ENCODE measurements at regions of chr4 and their contacts with region 1.

Region 1: GRCh38 chr4:173420324-173420752 is 21.4 kb upstream of the SCRG1 start:
- DNase-seq: peak; percentile 31
- H3K4me3 Mint-ChIP-seq: no peak overlapping the region
- H3K27ac Mint-ChIP-seq: no peak overlapping the region
- H3K4me1 Mint-ChIP-seq: peaks cover 15% of the 10 kb centered on the region
- H3K27me3 Mint-ChIP-seq: no peaks in the 10 kb centered on the region
- CTCF ChIP-seq: peak; percentile 39

Region 2: DNA sequence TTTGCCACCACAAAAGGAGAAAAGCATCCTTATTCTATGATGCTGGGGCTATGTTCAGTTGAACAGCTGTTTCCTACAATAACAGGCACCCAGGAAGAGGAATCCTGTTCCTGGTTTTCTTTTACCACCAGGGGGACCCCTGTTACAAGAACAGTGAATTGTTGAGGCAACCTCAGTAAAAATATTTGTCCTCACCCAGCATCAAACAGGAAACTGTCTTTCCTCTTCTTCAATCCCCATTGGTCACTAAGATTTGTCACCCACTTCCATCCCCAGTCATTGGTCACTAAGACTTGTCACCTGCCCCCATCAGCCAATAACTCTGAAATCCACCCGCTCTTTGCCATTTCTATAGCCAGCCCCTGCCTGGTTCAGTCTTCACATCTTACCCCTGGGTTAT is 395.2 kb before region 1 on chr4:
- CTCF ChIA-PET with region 1: interaction called, 4 read pairs
- POLR2A ChIA-PET with region 1: no interaction called
- intact Hi-C with region 1: loop called (anchors 5 kb)
- DNase-seq: peak; percentile 81
- H3K4me3 Mint-ChIP-seq: no peak overlapping the region
- H3K27ac Mint-ChIP-seq: no peak overlapping the region
- H3K4me1 Mint-ChIP-seq: no peaks in the 10 kb centered on the region
- H3K27me3 Mint-ChIP-seq: no peaks in the 10 kb centered on the region
- CTCF ChIP-seq: peak; percentile 74

Region 3: DNA sequence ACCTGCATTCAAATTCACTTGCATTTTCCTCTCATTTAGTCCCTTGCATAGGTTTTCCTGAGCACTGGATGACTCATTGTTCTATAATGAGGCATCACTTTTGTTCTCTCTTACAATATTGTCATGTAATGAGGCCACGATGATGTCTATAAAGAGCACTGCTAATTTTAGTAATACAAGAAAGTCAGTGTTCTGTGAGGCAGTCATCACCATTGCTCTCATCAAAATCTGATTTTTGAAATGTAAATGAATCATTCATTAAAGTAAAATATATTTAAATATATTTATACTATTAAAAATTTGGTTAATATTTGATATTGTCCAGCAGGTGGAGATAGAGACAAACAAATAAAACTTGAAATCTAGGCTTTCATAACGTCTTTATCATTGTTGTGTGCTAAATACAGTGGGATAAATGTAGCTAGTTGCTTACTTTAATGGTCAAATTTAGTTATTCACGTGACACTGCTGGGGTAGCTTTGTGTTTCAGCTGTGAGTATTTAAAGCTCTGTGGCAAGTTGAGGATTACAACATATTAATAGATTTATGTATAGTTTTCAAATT is 101.6 kb before region 1 on chr4:
- CTCF ChIA-PET with region 1: interaction called, 124 read pairs
- POLR2A ChIA-PET with region 1: interaction called, 28 read pairs
- intact Hi-C with region 1: loop called (anchors 1 kb)
- DNase-seq: peak; percentile 56
- H3K4me3 Mint-ChIP-seq: no peak overlapping the region
- H3K27ac Mint-ChIP-seq: no peak overlapping the region
- H3K4me1 Mint-ChIP-seq: peaks cover 12% of the 10 kb centered on the region
- H3K27me3 Mint-ChIP-seq: no peaks in the 10 kb centered on the region
- CTCF ChIP-seq: peak; percentile 46

Region 4: GRCh38 chr4:173370477-173371291 is 49.7 kb before region 1 on chr4 and contains the start of gene SAP30:
- CTCF ChIA-PET with region 1: interaction called, 14 read pairs
- POLR2A ChIA-PET with region 1: interaction called, 183 read pairs
- intact Hi-C with region 1: loop called (anchors 1 kb)
- DNase-seq: peak; percentile 98
- H3K4me3 Mint-ChIP-seq: peak within 1 kb of the TSS; percentile 96
- H3K27ac Mint-ChIP-seq: peak within 1 kb of the TSS; percentile 96
- H3K4me1 Mint-ChIP-seq: peaks cover 20% of the 10 kb centered on the region
- H3K27me3 Mint-ChIP-seq: no peaks in the 10 kb centered on the region
- CTCF ChIP-seq: no peak
- total RNA-seq, gene SAP30: 17.6 and 30.6 TPM in 2 replicates

Region 5: DNA sequence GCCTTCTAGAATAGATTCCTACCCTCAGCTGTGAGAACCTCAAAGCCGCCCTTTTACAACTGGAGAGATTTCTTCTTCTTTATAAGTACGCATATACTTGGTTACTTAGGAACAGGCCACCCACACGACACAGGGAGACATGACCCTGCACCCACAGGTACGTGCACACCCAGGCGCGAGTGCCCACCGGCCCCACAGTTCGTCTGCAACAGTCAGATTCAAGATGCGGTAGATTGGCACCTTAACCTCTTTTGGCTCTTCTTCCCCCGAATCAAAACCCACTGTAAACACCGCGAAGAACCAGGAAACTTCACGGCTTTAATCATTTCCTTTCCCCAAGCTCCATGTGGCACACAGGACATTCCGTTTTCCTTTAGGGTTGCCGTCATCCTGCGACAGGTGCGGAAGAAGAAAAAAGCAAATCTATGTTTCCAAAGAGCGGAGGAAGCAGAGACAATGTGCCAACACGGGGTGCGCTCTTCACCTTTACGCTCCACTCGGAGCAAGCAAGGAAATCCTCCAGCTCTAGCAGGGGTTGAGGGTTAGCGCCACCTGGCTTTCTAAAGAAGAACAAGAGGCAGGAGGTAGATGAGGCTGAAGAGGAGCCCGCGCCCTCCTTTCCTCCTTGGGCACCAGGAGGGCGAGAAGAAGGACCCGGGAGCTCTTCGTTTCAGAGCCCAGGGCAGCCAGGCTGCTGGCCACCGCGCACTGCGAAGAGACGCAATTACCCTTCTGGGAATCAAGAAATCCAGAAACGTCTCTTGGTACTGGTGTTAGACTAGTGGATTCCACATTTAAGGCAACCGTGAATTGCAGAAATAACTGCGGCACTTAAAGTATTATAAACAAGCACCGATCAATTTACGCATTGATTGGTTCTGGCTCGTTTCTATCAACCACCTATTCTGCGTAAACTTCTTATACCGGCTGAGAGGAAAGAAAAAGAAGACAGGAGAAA is 74.0 kb after region 1 on chr4:
- CTCF ChIA-PET with region 1: interaction called, 11 read pairs
- POLR2A ChIA-PET with region 1: interaction called, 3 read pairs
- intact Hi-C with region 1: loop called (anchors 1 kb)
- DNase-seq: peak; percentile 76
- H3K4me3 Mint-ChIP-seq: peak overlapping the region; percentile 67
- H3K27ac Mint-ChIP-seq: no peak overlapping the region
- H3K4me1 Mint-ChIP-seq: peaks cover 8% of the 10 kb centered on the region
- H3K27me3 Mint-ChIP-seq: peaks cover 14% of the 10 kb centered on the region
- CTCF ChIP-seq: peak; percentile 61

Region 6: DNA sequence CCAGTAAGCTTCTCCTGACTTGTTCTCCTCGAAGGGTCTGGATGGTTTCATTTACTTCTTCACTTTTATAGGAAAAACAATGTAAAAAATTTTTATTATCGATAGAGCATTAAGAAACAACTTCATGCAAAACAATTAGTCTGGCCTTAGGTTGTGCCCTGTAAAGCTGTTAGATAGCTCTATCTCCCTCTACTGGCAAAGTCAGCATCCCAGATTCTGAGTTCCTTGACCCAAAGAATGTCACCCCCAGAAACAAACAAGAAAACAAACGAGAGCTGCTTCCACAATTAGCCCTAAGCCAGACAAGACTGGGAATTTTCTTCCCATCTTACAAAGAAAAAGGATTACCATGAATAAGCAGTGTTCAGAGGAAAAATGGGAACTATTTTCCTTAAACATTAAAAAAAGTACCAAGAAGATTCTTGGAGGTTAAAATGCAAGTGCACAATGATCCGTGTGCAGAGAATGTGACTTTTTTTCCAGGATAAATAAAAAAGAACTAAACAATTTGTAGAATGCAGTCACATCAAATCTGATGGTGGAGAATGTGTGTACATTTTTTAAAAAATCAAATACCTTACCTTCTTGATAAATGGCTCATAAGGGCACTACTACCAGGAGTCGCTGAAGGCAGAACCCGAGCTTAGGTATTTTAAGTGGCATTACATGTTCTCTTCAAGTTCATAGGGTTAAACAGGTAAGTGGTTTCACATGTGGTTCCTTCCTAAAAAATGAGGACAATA is 570.0 kb after region 1 on chr4:
- CTCF ChIA-PET with region 1: interaction called, 12 read pairs
- POLR2A ChIA-PET with region 1: no interaction called
- intact Hi-C with region 1: no loop called
- DNase-seq: peak; percentile 42
- H3K4me3 Mint-ChIP-seq: no peak overlapping the region
- H3K27ac Mint-ChIP-seq: no peak overlapping the region
- H3K4me1 Mint-ChIP-seq: no peaks in the 10 kb centered on the region
- H3K27me3 Mint-ChIP-seq: peaks cover 96% of the 10 kb centered on the region
- CTCF ChIP-seq: peak; percentile 61

Region 7: DNA sequence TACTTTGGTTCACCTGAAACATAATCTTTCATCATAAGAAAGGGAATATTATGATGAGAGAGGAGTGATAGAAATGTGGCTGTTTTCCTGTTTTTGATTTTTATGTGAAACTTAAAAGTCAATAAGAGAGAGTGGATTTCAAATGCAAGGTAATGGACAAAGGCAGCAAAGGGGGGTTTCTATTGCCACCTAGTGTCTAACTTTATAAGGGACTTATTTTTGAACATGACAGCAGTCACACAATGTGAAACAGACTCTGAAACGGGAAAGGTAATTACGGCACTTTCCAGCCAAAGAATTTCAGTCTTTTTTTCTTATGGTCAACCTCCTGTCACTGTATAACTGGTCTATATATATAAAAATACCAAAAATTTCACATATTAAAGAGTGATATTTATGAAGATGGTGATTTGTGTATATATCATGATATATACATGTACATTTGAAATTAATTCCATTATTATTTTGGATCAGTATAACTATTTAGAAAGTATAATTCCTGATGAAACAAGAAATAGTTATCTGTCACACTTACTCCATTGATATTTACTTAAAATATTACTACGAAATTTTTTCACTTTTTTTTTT is 736.0 kb after region 1 on chr4:
- CTCF ChIA-PET with region 1: interaction called, 3 read pairs
- POLR2A ChIA-PET with region 1: no interaction called
- intact Hi-C with region 1: loop called (anchors 1 kb)
- DNase-seq: peak; percentile 41
- H3K4me3 Mint-ChIP-seq: no peak overlapping the region
- H3K27ac Mint-ChIP-seq: no peak overlapping the region
- H3K4me1 Mint-ChIP-seq: no peaks in the 10 kb centered on the region
- H3K27me3 Mint-ChIP-seq: peaks cover 95% of the 10 kb centered on the region
- CTCF ChIP-seq: no peak